ENCODE measurements at regions of chr4 and their contacts with region 1.

Region 1: DNA sequence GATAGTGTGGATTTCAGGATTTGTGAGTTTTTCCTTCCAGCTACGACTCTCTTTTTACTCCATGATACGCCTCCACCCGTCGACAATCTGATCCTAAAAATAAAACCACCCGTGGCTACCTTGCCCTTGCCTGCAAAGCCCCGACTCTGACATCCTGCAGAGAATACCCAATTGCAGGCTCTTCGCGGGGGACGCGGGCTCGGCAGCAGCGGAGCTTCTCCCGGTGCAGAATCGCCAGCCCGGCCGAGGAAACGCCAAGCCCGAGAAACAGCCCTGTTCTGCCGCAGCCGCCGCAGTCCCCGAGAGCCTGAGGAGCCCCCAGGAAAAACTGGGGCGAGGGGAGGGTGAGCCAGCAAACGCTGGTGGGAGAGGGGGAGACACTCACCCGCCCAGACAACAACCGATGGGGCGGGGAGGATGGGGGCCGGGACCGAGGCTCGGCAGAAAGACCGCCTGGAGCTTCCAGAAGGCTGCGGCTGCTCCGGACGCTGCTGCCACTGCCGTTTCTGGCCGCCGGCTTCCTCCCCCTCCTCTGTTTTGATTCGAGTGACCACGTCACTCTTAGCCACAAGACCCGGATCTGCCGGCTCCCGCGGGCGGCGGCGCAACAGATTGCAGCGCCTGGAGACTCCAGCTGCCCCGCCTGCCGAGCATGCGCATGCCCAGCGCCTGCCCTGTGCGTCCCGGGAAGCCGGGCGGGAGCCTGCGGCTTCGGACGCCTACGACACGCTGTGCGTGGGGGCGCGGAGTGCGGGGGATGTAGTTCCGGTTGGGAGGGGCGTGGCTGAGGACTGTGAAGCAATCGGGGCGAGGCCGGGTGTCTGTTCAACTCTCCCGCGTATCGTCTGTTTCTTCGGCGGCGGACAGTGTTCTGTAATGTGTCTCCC is at the start of gene SMIM14:
- DNase-seq: peak; percentile 98 to 99 (median 99)
- ATAC-seq: peak; percentile 97
- H3K4me3 ChIP-seq: peak within 1 kb of the TSS; percentile 95
- H3K4me1 ChIP-seq: peaks cover 23% of the 10 kb centered on the region
- CTCF ChIP-seq: no peak
- total RNA-seq, gene SMIM14: 69.5 to 142 (median 123) TPM

Region 2: DNA sequence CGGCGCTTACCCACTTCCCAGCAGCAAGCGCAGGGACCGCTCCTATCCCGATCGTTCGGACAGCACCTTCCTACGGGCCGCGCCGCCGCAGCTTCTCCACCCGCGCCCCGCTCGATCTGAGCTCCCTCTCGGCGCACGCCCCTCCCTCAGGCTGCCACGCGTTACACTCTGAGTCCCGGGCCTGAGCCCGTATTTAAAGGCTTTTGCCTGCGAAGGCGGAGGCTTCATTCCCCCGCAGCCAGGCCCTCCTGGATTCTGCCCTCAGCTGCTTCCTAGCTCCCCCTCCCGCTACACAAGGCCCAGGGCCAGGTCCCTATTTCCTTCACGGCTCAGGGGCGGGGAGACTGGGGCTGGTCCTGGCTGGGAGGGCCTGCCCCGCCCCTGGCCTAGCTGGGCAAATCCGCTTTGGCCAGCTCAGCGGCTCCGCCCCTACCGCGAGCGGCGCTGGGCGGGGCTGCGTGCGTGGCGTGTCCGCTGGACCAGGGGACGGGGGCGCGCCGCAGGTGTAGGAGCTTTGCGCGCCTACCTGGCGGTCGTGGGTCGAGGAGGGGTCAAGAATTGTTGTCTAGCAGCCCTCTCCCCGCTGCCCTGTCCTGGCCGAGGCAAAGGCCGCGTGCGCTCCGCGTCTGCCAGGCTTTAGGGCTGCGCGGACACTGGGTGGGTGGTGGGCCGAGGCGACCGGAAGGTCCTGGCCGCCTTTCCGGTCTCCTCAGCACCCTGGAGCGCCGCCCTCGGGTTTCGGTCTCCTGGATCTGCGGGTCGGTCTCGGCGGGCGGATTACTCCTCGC is 111.1 kb before region 1 on chr4 and contains the start of gene UGDH:
- intact Hi-C with region 1: loop called (anchors 5 to 10 kb)
- DNase-seq: peak; percentile 97 to 98 (median 98)
- ATAC-seq: peak; percentile 94
- H3K4me3 ChIP-seq: peak within 1 kb of the TSS; percentile 79
- H3K4me1 ChIP-seq: peaks cover 21% of the 10 kb centered on the region
- CTCF ChIP-seq: no peak
- total RNA-seq, gene UGDH: 148 to 352 (median 263) TPM

Measured in mucosa of descending colon (tissue), 3 donors.